CD8-positive, alpha-beta memory T cell (primary cell): ENCODE measurements at regions of chr3 and their contacts with region 1.

Region 1: DNA sequence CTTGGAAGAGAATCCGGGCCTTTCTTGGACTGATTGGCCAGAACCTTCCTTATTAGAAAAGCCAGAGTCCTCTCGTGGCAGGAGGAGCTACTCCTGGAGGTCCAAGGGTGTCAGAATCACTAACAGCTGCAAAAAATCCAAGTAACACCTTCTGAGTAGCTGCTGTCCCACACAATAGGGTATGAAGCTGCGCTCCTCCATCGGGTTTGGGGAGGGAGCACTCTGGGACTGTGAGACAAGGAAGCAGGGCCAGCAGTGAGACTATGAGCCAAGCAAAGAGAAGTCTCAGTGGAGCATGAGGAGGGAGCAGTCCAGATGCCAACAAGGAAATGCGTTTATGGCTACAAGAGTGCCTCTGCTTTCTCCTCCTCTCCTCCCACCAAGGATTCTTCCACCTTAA is 21.7 kb downstream of the SEMA3G start:
- DNase-seq: no peak
- H3K4me3 ChIP-seq: no peak overlapping the region
- H3K4me3 Mint-ChIP-seq: no peak overlapping the region
- H3K27ac ChIP-seq: no peak overlapping the region
- H3K27ac Mint-ChIP-seq: peak overlapping the region in 1 of 8 donors; percentile 37
- H3K4me1 ChIP-seq: no peaks in the 10 kb centered on the region
- H3K4me1 Mint-ChIP-seq: no peaks in the 10 kb centered on the region
- H3K27me3 ChIP-seq: no peaks in the 10 kb centered on the region
- H3K27me3 Mint-ChIP-seq: no peaks in the 10 kb centered on the region

Region 2: GRCh38 chr3:52407779-52408178 is 15.4 kb before region 1 on chr3:
- CTCF ChIA-PET with region 1: interaction called, 24 read pairs
- POLR2A ChIA-PET with region 1: no interaction called
- DNase-seq: no peak
- H3K4me3 ChIP-seq: no peak overlapping the region
- H3K4me3 Mint-ChIP-seq: peak overlapping the region in 5 of 7 donors; percentile 80 to 99 (median 91)
- H3K27ac ChIP-seq: no peak overlapping the region
- H3K27ac Mint-ChIP-seq: peak overlapping the region in 7 of 8 donors; percentile 32 to 97 (median 90)
- H3K4me1 ChIP-seq: peaks cover 41% of the 10 kb centered on the region
- H3K4me1 Mint-ChIP-seq: peaks cover 32 to 47% (median 38%) of the 10 kb centered on the region in 3 donors
- H3K27me3 ChIP-seq: no peaks in the 10 kb centered on the region
- H3K27me3 Mint-ChIP-seq: no peaks in the 10 kb centered on the region